Mucosa of descending colon (tissue), 3 donors: ENCODE measurements at regions of chr22 and their contacts with region 1.

Region 1: GRCh38 chr22:46071451-46072109 is 78.7 kb upstream of the PPARA start:
- DNase-seq: peak; percentile 91 to 93 (median 91)
- ATAC-seq: peak; percentile 35
- H3K4me3 ChIP-seq: peak overlapping the region; percentile 64
- H3K4me1 ChIP-seq: peaks cover 39% of the 10 kb centered on the region
- CTCF ChIP-seq: no peak

Region 2: DNA sequence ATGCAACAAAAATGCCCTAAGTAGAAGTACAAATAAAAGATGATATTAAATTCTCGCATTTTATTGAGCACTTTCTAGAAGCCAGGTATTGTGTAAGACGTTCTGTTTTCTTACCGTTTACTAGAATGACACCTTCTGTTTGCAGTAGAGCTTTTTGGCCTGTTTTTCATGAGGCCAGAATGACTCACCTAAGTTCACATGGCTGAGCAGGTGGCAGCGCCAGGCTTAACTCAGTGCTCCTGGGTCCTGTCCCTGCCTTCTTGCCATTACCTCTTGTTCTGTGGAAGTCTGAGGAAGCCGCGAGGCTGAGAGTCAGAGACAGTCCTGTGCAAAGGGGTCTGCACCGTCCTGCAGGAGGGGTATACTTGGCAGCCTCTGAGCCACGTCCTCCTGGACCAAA is 286.1 kb before region 1 on chr22:
- intact Hi-C with region 1: no loop called
- DNase-seq: no peak
- ATAC-seq: peak; percentile 79
- H3K4me3 ChIP-seq: no peak overlapping the region
- H3K4me1 ChIP-seq: no peaks in the 10 kb centered on the region
- CTCF ChIP-seq: no peak

Region 3: DNA sequence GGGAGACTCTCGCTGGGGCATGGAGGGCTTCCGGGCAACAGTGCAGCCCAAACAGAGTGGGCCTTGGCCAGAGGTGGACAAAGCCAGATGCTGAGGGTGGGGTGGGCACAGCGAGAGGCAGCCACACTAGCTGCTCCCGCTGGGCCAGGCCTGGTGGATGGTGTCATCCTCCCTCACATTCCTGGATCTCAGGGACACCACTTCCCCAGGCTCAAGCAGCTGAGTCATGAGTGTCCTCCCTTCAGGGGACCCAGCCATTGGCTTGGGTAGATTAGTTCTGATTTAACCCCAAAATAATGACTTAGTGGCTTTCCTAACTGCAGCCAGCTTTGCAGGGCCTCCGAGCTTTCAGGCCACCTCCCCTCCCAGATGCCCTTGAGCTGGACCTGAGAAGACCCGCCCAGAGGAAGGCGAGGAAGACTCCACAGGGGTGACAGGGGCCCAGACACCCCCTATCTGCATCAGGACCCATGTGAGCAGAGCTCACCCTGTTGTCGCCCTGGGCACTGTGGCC is 68.8 kb before region 1 on chr22:
- intact Hi-C with region 1: no loop called
- DNase-seq: peak in 1 of 3 donors; percentile 52
- ATAC-seq: no peak
- H3K4me3 ChIP-seq: no peak overlapping the region
- H3K4me1 ChIP-seq: peaks cover 11% of the 10 kb centered on the region
- CTCF ChIP-seq: no peak

Region 4: GRCh38 chr22:46013460-46014416 is 57.8 kb before region 1 on chr22:
- intact Hi-C with region 1: loop called in 1 of 2 experiments (anchors 10 kb)
- DNase-seq: peak; percentile 95
- ATAC-seq: peak; percentile 94
- H3K4me3 ChIP-seq: peak overlapping the region; percentile 28
- H3K4me1 ChIP-seq: peaks cover 10% of the 10 kb centered on the region
- CTCF ChIP-seq: peak; percentile 88